AG04449 (cell line): ENCODE measurements at regions of chr3 and their contacts with region 1.

Region 1: GRCh38 chr3:138468886-138469285 is 34.5 kb downstream of the ESYT3 start:
- DNase-seq: no peak
- H3K4me3 ChIP-seq: no peak overlapping the region
- CTCF ChIP-seq: no peak

Region 2: GRCh38 chr3:138479438-138479863 is 10.6 kb after region 1 on chr3:
- CTCF ChIA-PET with region 1: interaction called, 27 read pairs
- POLR2A ChIA-PET with region 1: no interaction called
- DNase-seq: no peak
- H3K4me3 ChIP-seq: no peak overlapping the region
- CTCF ChIP-seq: peak; percentile 90